HCT116 (cell line): ENCODE measurements at regions of chr4 and their contacts with region 1.

Region 1: DNA sequence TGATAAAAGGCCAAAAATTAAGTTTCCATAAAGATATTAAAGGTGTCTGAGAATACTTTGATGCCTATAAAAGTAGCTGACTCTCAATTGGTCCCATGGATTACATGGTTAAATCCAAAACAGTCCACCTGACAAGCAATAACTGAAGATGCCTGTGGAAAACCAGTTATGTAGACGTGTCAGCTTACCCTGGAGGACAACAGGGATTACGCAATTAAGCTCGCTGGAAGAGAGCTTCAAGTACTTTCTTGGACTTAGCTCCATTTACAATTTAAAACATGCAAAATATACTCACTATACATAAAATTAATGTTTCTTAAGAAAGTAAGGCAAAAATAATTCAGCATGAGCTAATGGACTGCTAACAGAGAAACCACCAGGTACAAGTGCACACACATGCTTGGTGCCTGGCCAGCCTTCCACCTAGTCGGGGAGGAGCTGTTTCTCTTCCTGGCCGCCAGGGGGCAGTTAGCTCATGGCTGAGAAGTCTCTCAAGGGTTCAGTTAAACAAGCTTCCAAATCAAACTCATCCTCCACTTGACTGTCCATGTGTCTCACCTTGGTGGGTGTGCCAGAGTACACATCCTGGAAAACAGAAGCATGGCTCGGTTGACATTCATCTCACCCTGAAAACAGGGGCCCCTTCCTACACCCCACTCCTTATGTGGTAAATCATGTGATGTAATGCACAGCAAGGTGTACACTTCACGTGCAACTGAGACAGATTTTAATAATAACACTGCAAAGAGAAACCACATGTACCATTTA is 9.2 kb upstream of the FAM53A start:
- DNase-seq: peak; percentile 67
- ATAC-seq: peak; percentile 91
- H3K4me3 ChIP-seq: no peak overlapping the region
- H3K27ac ChIP-seq: no peak overlapping the region
- H3K4me1 ChIP-seq: no peaks in the 10 kb centered on the region
- H3K27me3 ChIP-seq: no peaks in the 10 kb centered on the region
- CTCF ChIP-seq: peak; percentile 79 to 95 (median 95)
- POLR2A ChIP-seq: no peak
- RAD21 ChIP-seq: peak; percentile 69

Region 2: DNA sequence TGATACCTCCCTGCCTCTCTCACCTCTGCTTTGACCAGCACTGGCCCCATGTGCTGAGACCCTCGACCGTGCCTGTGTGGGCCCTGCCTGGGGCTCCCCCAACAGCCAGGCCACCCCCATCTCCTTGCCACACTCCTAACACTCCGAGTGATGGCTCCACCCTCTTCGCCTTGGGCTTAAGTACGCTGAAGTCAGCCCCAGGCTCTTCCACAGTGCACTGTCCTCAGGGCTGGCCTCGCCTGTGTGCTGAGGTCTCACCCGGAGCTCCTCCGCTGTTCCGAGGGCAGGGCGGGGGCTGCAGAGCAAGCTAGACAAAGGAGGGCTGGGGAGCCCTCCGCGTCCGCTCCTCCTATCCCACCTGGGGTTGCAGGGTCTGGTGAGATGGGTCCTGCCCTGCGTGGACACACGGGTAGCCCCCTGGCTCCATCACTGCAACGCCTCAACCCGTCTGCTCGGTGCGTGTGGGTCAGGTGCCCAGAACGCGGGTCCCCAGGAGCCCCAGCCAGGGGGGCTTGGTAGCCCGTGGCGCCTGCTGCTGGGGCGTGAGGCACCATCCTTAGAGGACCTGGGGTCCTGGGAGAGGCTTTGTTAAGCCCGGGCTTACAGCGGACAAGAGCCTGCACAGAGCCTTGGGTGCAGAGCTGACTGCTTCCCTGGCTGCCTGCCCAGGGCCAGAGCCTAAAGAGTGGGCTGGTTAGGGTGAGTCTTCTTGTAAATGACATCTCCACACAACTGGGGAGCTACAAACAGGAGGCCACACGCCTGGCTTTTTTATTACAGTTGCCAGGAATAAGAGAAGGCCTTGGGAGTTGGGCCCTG is 244.5 kb before region 1 on chr4:
- CTCF ChIA-PET with region 1: no interaction called
- POLR2A ChIA-PET with region 1: no interaction called
- RAD21 ChIA-PET with region 1: no interaction called
- intact Hi-C with region 1: no loop called
- DNase-seq: no peak
- ATAC-seq: no peak
- H3K4me3 ChIP-seq: no peak overlapping the region
- H3K27ac ChIP-seq: no peak overlapping the region
- H3K4me1 ChIP-seq: no peaks in the 10 kb centered on the region
- H3K27me3 ChIP-seq: 0 out of 2 replicates have a peak, but pooled peaks cover 4% of the 10 kb centered on the region
- CTCF ChIP-seq: no peak
- POLR2A ChIP-seq: no peak
- RAD21 ChIP-seq: no peak

Region 3: DNA sequence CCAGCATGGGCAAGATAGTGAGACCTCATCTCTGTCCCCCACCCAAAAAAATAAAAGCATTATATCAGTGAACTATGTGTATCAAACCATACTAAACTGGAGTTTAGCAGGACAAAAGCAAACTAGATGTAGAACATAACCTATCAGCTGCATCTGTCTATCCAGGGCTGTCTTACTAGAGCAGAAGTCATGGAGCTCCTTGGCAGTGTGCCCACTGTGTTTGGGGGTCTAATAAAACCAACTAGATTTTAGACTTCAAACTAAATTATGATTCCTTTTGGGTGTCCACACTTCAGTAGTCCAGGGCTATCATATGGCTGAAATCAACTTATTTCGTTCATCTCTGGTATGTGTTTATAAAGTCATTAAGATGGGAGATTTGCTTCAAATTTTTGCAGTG is 10.6 kb after region 1 on chr4:
- CTCF ChIA-PET with region 1: interaction called, 17 read pairs
- POLR2A ChIA-PET with region 1: interaction called, 4 read pairs
- RAD21 ChIA-PET with region 1: no interaction called
- intact Hi-C with region 1: no loop called
- DNase-seq: no peak
- ATAC-seq: no peak
- H3K4me3 ChIP-seq: no peak overlapping the region
- H3K27ac ChIP-seq: no peak overlapping the region
- H3K4me1 ChIP-seq: peaks cover 0 to 4% of the 10 kb centered on the region in 2 experiments; a peak in 1 of 4 replicates
- H3K27me3 ChIP-seq: no peaks in the 10 kb centered on the region
- CTCF ChIP-seq: no peak
- POLR2A ChIP-seq: no peak
- RAD21 ChIP-seq: no peak

Region 4: GRCh38 chr4:1712216-1713002 is 19.1 kb after region 1 on chr4 and contains the start of gene SLBP:
- CTCF ChIA-PET with region 1: interaction called, 10 read pairs
- POLR2A ChIA-PET with region 1: interaction called, 5 read pairs
- RAD21 ChIA-PET with region 1: no interaction called
- intact Hi-C with region 1: no loop called
- DNase-seq: peak; percentile 93
- ATAC-seq: peak; percentile 85
- H3K4me3 ChIP-seq: peak within 1 kb of the TSS; percentile 71 to 98
- H3K27ac ChIP-seq: peak within 1 kb of the TSS; percentile 100
- H3K4me1 ChIP-seq: peaks cover 11 to 39% of the 10 kb centered on the region in 2 experiments; a peak in 3 of 4 replicates
- H3K27me3 ChIP-seq: no peaks in the 10 kb centered on the region
- CTCF ChIP-seq: no peak
- POLR2A ChIP-seq: peak; percentile 79
- RAD21 ChIP-seq: no peak
- total RNA-seq, gene SLBP: 101 TPM

Region 5: GRCh38 chr4:1721004-1721665 is 27.8 kb after region 1 on chr4 and contains the starts of genes TACC3 and TMEM129:
- CTCF ChIA-PET with region 1: interaction called, 26 read pairs
- POLR2A ChIA-PET with region 1: interaction called, 6 read pairs
- RAD21 ChIA-PET with region 1: no interaction called
- intact Hi-C with region 1: loop called (anchors 1 kb)
- DNase-seq: peak; percentile 96
- ATAC-seq: peak; percentile 84
- H3K4me3 ChIP-seq: peak within 1 kb of the TSS; percentile 94 to 96
- H3K27ac ChIP-seq: peak within 1 kb of the TSS; percentile 97
- H3K4me1 ChIP-seq: peaks cover 10 to 29% of the 10 kb centered on the region in 2 experiments
- H3K27me3 ChIP-seq: no peaks in the 10 kb centered on the region
- CTCF ChIP-seq: no peak
- POLR2A ChIP-seq: peak; percentile 38
- RAD21 ChIP-seq: no peak
- total RNA-seq, gene TACC3: 106 TPM
- total RNA-seq, gene TMEM129: 29.4 TPM

Region 6: GRCh38 chr4:1726146-1726934 is 33.0 kb after region 1 on chr4:
- CTCF ChIA-PET with region 1: interaction called, 26 read pairs
- POLR2A ChIA-PET with region 1: interaction called, 6 read pairs
- RAD21 ChIA-PET with region 1: interaction called in 1 of 2 experiments, 3 read pairs
- intact Hi-C with region 1: loop called (anchors 1 kb)
- DNase-seq: peak; percentile 78
- ATAC-seq: peak; percentile 68
- H3K4me3 ChIP-seq: no peak overlapping the region
- H3K27ac ChIP-seq: peak overlapping the region; percentile 74
- H3K4me1 ChIP-seq: peaks cover 22 to 37% of the 10 kb centered on the region in 2 experiments
- H3K27me3 ChIP-seq: no peaks in the 10 kb centered on the region
- CTCF ChIP-seq: peak in 2 of 3 experiments; percentile 98 to 99; a peak in 4 of 6 replicates
- POLR2A ChIP-seq: no peak
- RAD21 ChIP-seq: no peak